ENCODE measurements at regions of chr5 and their contacts with region 1.

Region 1: DNA sequence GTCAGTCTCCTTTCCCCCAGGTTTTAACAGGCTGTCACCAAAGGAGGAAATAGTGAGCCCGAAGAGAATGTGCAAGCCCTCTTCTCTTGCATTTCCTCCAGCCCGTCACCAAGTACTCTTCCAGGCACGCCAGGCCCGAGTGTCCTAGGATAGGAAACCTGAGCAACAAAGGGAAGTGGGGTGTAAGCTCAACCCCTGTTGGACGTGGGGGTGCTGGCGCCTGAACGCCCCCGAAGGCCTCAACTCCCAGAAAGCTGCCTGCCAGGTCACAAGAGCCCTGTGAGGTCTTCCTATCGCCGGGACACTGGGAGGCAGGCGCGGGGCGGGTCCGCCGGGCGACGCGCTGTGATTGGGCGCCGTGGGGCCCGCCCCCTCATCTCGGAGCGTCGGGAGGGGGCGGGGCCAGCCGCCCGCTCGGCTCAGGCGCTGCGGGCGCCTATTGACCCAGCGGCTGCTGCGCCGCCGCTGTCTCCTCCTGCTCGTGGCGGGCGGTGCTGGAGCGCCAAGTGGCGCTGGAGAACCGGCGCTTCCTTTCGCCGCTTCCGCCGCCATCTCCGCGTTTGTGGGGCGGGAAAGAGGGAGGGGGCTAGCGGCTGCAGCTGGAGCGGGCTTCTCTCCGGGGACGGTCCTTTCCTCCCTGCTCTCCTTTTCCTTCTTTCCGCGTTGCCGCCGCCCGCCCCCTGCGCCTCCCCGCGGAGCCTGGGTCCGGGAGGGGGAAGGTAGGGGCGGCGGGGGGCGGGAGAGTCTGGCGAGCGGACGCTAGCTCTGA is 572 bp upstream of the MAN2A1 start:
- DNase-seq: peak; percentile 94
- H3K4me3 Mint-ChIP-seq: peak overlapping the region; percentile 93
- H3K27ac Mint-ChIP-seq: peak overlapping the region; percentile 95
- H3K4me1 Mint-ChIP-seq: peaks cover 35% of the 10 kb centered on the region
- H3K27me3 Mint-ChIP-seq: peaks cover 5% of the 10 kb centered on the region

Region 2: DNA sequence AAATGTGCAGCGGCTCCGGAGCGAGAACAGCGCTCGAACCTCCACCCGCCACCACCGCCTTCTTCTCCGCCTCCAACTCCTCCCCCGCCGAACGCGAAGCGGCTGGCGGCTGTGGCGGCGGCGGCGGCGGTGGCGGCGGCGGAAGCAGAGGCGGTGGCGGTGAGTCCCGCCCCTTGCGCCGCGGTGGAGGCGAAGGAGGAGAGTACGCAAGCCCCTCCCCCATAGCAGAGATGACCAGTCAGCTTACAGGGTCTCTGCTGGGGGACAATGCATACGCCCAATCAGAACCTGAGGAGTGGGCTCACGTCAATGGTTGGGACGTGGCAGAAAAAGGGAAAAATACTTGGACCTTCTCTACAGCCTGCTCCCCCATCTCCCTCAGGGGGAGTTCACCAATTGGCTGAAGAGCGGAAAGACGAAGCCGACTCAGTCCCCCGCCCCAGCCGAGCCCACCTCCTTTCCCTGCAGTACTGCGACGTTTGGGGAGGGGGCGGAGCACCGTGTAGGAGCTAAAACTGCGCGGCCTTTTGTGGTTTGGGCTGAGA is 279.2 kb before region 1 on chr5 and contains the start of gene PJA2:
- intact Hi-C with region 1: loop called (anchors 1 kb)
- DNase-seq: peak; percentile 99
- H3K4me3 Mint-ChIP-seq: peak within 1 kb of the TSS; percentile 99
- H3K27ac Mint-ChIP-seq: peak within 1 kb of the TSS; percentile 100
- H3K4me1 Mint-ChIP-seq: peaks cover 42% of the 10 kb centered on the region
- H3K27me3 Mint-ChIP-seq: no peaks in the 10 kb centered on the region
- total RNA-seq, gene PJA2: 39.4 and 40.6 TPM in 2 replicates

Region 3: GRCh38 chr5:109743770-109744212 is 54.6 kb after region 1 on chr5:
- intact Hi-C with region 1: no loop called
- DNase-seq: no peak
- H3K4me3 Mint-ChIP-seq: no peak overlapping the region
- H3K27ac Mint-ChIP-seq: no peak overlapping the region
- H3K4me1 Mint-ChIP-seq: peaks cover 15% of the 10 kb centered on the region
- H3K27me3 Mint-ChIP-seq: no peaks in the 10 kb centered on the region

Region 4: GRCh38 chr5:109921735-109922380 is 232.7 kb after region 1 on chr5:
- intact Hi-C with region 1: loop called (anchors 5 kb)
- DNase-seq: peak; percentile 88
- H3K4me3 Mint-ChIP-seq: peak overlapping the region; percentile 72
- H3K27ac Mint-ChIP-seq: peak overlapping the region; percentile 90
- H3K4me1 Mint-ChIP-seq: peaks cover 26% of the 10 kb centered on the region
- H3K27me3 Mint-ChIP-seq: no peaks in the 10 kb centered on the region

Region 5: GRCh38 chr5:110086658-110087388 is 397.7 kb after region 1 on chr5:
- intact Hi-C with region 1: loop called (anchors 1 kb)
- DNase-seq: peak; percentile 80
- H3K4me3 Mint-ChIP-seq: peak overlapping the region; percentile 52
- H3K27ac Mint-ChIP-seq: peak overlapping the region; percentile 82
- H3K4me1 Mint-ChIP-seq: peaks cover 30% of the 10 kb centered on the region
- H3K27me3 Mint-ChIP-seq: no peaks in the 10 kb centered on the region

Region 6: DNA sequence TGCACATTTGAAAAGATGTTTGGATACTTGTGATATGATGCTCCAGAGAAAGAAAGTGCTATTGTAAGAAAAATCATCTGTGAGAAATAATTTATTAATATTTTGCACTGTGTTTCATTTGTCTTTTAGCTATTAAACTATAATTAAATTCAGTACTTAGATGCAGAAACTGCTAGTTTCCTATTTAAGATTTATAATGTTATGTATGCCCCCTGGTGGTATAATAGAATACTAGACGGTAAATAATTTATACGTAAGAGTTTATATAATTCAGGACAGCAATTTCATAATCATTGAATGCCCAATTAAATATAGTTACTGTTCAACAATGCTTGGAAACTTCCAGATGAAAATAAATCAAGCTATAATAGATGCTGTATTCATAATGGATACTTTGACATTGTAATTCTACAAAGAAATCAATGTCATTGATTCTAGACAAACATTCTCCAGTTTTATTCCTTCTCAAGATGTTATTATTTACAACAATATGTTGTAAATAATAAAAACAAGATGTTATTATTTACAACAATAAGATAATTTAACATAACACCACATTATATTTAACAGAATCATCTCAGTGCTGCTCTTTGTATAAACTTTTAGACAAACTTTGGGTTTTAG is 936.3 kb after region 1 on chr5:
- intact Hi-C with region 1: loop called (anchors 5 kb)
- DNase-seq: no peak
- H3K4me3 Mint-ChIP-seq: no peak overlapping the region
- H3K27ac Mint-ChIP-seq: no peak overlapping the region
- H3K4me1 Mint-ChIP-seq: no peaks in the 10 kb centered on the region
- H3K27me3 Mint-ChIP-seq: no peaks in the 10 kb centered on the region